ENCODE measurements at regions of chr6 and their contacts with region 1.

Region 1: DNA sequence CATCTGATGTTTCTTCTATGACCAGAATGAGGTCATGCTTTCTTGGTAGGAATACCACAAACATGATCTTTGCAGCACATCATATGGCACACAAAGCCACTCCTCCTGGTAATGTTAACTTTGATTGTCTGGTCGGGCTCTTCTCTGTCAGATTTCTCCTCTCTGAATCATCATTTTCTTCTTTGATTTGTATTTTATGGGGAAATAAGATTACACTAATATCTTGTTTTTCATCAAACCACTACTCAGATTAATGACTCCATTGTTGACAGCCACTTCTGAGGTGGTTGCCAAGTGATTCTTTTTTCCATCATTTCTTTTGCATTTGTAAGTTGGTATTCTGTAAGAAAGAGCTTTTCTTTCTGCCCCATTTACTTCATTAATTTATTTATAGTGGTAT is 29.5 kb downstream of the TRMT11 start:
- DNase-seq: no peak
- ATAC-seq: no peak
- H3K4me3 ChIP-seq: no peak overlapping the region
- H3K4me3 Mint-ChIP-seq: no peak overlapping the region
- H3K27ac ChIP-seq: no peak overlapping the region
- H3K27ac Mint-ChIP-seq: no peak overlapping the region
- H3K4me1 ChIP-seq: no peaks in the 10 kb centered on the region
- H3K4me1 Mint-ChIP-seq: peaks cover 0 to 7% (median 0%) of the 10 kb centered on the region in 7 donors
- H3K27me3 ChIP-seq: no peaks in the 10 kb centered on the region
- H3K27me3 Mint-ChIP-seq: no peaks in the 10 kb centered on the region

Region 2: GRCh38 chr6:126033696-126034095 is 17.8 kb after region 1 on chr6:
- CTCF ChIA-PET with region 1: no interaction called
- POLR2A ChIA-PET with region 1: no interaction called
- intact Hi-C with region 1: loop called in 1 of 2 experiments (anchors 2 kb)
- DNase-seq: peak in 1 of 9 donors; percentile 2
- ATAC-seq: peak; percentile 57
- H3K4me3 ChIP-seq: no peak overlapping the region
- H3K4me3 Mint-ChIP-seq: no peak overlapping the region
- H3K27ac ChIP-seq: no peak overlapping the region
- H3K27ac Mint-ChIP-seq: peak overlapping the region in 1 of 9 donors; percentile 47
- H3K4me1 ChIP-seq: no peaks in the 10 kb centered on the region
- H3K4me1 Mint-ChIP-seq: peaks cover 0 to 7% (median 5%) of the 10 kb centered on the region in 7 donors
- H3K27me3 ChIP-seq: no peaks in the 10 kb centered on the region
- H3K27me3 Mint-ChIP-seq: no peaks in the 10 kb centered on the region

Measured in naive thymus-derived CD4-positive, alpha-beta T cell (primary cell).